Panc1 (cell line): ENCODE measurements at regions of chr5 and their contacts with region 1.

Region 1: DNA sequence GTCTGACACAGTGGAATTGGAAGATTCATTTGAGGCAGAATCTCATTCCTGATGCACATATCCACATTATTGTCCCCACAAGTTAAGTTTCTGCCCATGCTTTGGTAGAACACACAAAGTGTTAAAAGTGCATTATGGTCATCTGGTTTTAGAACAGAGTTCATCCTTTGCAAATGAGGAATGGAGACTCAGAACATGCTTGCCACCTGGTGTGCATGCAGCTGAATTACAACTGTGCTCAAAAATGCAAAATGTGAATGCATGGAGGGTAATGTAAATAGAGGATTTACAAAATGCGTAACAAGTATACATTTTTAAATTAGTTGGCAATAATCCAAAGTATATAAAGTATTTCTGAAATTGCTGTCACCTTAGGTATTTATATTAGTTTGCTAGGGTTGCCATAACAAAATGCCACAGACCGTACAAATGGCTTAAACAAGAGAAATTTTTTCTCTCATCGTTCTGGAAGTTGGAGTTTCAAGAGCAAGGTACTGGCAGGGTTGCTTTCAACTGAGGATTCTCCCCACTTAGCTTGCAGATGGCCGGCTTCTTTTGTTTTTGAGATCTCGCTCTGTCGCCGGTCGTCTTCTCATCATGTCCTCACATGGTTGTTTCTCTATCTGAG is 671.2 kb downstream of the TAF11L14 start:
- DNase-seq: peak; percentile 53
- ATAC-seq: peak; percentile 71
- H3K4me3 ChIP-seq: no peak overlapping the region
- H3K27ac ChIP-seq: no peak overlapping the region
- H3K4me1 ChIP-seq: no peaks in the 10 kb centered on the region
- H3K27me3 ChIP-seq: no peaks in the 10 kb centered on the region; the same call in 1 of the 2 replicates
- CTCF ChIP-seq: peak; percentile 81

Region 2: GRCh38 chr5:18119156-18119785 is 186.1 kb before region 1 on chr5:
- CTCF ChIA-PET with region 1: no interaction called
- POLR2A ChIA-PET with region 1: no interaction called
- in situ Hi-C with region 1: no loop called
- intact Hi-C with region 1: loop called (anchors 10 kb)
- DNase-seq: no peak
- ATAC-seq: no peak
- H3K4me3 ChIP-seq: no peak overlapping the region
- H3K27ac ChIP-seq: no peak overlapping the region
- H3K4me1 ChIP-seq: 0 out of 2 replicates have a peak, but pooled peaks cover 3% of the 10 kb centered on the region
- H3K27me3 ChIP-seq: no peaks in the 10 kb centered on the region
- CTCF ChIP-seq: no peak

Region 3: GRCh38 chr5:18985171-18985758 is 679.9 kb after region 1 on chr5:
- CTCF ChIA-PET with region 1: no interaction called
- POLR2A ChIA-PET with region 1: no interaction called
- in situ Hi-C with region 1: no loop called
- intact Hi-C with region 1: no loop called
- DNase-seq: no peak
- ATAC-seq: no peak
- H3K4me3 ChIP-seq: no peak overlapping the region
- H3K27ac ChIP-seq: no peak overlapping the region; the same call in 1 of the 2 replicates
- H3K4me1 ChIP-seq: no peaks in the 10 kb centered on the region
- H3K27me3 ChIP-seq: no peaks in the 10 kb centered on the region
- CTCF ChIP-seq: no peak